Tibial artery (tissue), 4 donors: ENCODE measurements at regions of chr5 and their contacts with region 1.

Region 1: DNA sequence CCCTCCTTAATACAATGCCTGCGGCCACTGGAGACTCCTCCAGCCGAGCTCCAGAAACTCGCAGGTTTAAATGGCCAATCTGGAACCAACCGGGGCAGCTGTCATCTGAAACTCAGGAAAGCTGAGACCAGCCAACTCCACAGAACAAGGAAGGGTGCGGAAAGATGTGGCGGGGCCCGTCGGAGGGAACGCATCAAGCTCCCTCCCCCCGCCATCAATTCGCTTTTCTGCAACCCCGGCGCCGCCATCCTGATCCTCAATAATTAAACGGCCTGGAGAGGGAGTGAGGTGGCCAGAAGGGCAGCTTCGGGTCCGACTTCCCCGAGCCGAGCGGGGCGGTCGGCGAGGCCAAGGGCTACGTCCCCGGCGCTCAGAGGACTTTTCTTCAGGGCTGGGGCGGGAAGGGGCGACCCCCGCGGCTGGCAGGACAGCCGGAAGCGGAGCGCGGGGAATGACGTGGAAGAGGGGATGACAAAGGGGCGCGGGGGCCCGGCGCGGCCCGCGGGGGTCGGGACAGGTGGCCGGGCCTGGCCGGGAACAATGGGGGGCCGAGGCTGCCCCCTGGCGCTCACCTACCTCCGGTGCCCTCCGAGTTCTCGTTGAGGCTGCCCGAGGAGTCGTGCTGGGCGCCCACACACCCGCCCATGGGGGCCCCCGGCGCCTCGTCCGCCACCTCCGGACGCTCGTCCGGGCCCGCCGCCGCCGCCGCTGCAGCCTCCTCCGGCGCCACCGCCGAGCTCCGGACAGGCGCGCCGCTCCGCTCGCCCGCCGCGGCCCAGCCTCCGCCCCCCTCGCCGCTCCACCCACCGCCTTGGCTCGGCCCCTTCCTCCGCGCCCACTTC is at the start of gene UBTD2:
- DNase-seq: peak; percentile 78 to 92
- H3K4me3 ChIP-seq: peak within 1 kb of the TSS; percentile 91 to 95
- H3K27ac ChIP-seq: peak within 1 kb of the TSS; percentile 93 to 96
- H3K4me1 ChIP-seq: peaks cover 0 to 23% (median 15%) of the 10 kb centered on the region in 4 donors
- H3K27me3 ChIP-seq: no peaks in the 10 kb centered on the region
- CTCF ChIP-seq: peak; percentile 35 to 43

Region 2: DNA sequence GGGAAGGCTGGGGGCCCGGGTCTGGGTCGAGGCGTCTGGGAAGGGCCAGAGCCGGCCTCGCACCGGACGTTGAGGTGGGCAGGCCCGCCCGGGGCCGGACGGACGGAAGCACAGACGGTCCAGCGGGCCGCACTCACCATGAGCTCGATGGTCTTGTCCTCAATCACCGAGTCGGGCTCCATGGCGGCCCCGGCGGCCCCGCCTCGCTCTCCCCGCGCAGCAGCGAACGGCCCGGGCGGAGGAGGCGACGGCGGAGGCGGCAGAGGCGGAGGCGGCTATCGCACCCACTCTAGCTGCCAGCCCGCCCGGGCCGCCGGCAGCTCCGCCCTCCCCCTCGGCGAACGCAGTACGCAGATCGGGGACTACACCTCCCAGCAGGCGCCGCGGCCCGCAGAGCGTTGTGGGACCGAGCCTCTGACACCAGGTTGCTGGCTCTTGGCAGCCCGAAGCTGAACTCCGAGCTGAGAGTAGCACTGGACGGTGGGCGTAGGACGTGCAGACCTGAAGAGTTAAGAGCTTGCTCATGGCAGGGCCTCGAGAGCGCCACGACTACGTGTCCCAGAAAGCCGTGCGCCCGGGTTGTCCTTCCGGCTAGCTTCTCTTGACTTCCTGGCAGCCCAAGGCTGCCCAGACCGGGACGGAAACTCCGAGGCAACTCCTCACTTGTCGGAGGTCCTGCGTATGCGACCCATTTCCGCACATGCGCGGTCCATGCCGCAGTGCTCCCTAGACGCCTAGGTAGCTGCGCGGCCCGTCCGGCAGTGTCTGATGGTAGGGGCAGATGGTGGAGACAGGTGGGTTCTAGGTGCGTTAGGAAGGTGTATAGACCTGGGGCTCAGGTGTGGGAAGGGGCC is 276.7 kb before region 1 on chr5 and contains the start of gene FBXW11:
- intact Hi-C with region 1: loop called (anchors 10 kb)
- DNase-seq: peak; percentile 97
- H3K4me3 ChIP-seq: peak within 1 kb of the TSS; percentile 92 to 97
- H3K27ac ChIP-seq: peak within 1 kb of the TSS; percentile 98
- H3K4me1 ChIP-seq: peaks cover 0 to 46% (median 36%) of the 10 kb centered on the region in 4 donors
- H3K27me3 ChIP-seq: no peaks in the 10 kb centered on the region
- CTCF ChIP-seq: no peak

Region 3: DNA sequence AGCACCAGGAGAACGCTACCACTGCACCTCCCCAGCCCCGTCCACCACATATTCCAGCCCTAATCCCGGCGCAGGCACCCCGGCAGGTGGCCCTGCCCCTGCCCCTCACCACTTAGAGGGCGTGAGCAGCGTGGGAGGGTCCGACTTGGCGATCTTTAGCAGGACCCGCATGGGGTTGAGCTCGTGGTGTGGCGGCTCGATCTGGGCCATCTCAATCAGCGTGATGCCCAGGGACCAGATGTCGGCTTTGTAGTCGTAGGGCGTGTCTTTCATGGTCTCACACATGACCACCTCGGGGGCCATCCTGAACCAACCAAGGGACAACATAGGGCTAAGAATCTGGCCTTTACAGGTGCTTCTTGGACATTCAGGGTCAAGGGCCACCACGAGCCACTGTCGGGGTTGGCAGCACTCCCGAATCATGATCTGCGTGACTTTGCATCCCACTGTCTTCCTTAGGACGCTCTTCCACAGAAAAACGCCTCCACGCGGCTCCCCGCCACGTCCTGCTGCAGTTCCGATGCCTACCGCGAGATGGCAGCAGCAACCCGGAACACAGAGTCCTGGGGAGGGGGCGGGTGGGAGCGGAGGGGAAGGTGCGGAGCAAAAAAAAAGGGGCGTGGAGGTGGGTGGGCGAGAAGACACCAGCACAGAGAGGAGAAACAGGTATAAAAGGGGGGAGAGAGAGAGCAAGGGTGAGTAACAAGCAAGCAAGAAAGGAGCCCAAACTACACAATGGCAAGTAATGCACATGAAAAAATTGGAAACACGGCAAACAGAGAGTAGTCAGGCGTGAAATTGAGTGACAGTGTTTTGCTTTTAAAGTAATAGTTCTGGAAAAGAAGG is 176.5 kb before region 1 on chr5:
- intact Hi-C with region 1: loop called (anchors 5 kb)
- DNase-seq: peak in 1 of 2 donors; percentile 57
- H3K4me3 ChIP-seq: peak overlapping the region in 1 of 2 donors; percentile 7
- H3K27ac ChIP-seq: no peak overlapping the region
- H3K4me1 ChIP-seq: peaks cover 0 to 49% (median 29%) of the 10 kb centered on the region in 4 donors
- H3K27me3 ChIP-seq: no peaks in the 10 kb centered on the region
- CTCF ChIP-seq: peak; percentile 80 to 99

Region 4: GRCh38 chr5:172188033-172188892 is 95.0 kb before region 1 on chr5 and contains the start of gene STK10:
- intact Hi-C with region 1: loop called (anchors 5 kb)
- DNase-seq: peak; percentile 88 to 96
- H3K4me3 ChIP-seq: peak within 1 kb of the TSS; percentile 87 to 94
- H3K27ac ChIP-seq: peak within 1 kb of the TSS; percentile 82 to 92
- H3K4me1 ChIP-seq: peaks cover 0 to 14% (median 8%) of the 10 kb centered on the region in 4 donors
- H3K27me3 ChIP-seq: no peaks in the 10 kb centered on the region
- CTCF ChIP-seq: peak; percentile 78 to 91